HEK293 (cell line): ENCODE measurements at regions of chr9 and their contacts with region 1.

Region 1: GRCh38 chr9:35116898-35117551 is 1.4 kb upstream of the ATOSB start:
- H3K4me3 ChIP-seq: peak overlapping the region; percentile 48
- H3K27ac ChIP-seq: no peak overlapping the region
- H3K4me1 ChIP-seq: peaks cover 15% of the 10 kb centered on the region
- CTCF ChIP-seq: peak; percentile 79

Region 2: DNA sequence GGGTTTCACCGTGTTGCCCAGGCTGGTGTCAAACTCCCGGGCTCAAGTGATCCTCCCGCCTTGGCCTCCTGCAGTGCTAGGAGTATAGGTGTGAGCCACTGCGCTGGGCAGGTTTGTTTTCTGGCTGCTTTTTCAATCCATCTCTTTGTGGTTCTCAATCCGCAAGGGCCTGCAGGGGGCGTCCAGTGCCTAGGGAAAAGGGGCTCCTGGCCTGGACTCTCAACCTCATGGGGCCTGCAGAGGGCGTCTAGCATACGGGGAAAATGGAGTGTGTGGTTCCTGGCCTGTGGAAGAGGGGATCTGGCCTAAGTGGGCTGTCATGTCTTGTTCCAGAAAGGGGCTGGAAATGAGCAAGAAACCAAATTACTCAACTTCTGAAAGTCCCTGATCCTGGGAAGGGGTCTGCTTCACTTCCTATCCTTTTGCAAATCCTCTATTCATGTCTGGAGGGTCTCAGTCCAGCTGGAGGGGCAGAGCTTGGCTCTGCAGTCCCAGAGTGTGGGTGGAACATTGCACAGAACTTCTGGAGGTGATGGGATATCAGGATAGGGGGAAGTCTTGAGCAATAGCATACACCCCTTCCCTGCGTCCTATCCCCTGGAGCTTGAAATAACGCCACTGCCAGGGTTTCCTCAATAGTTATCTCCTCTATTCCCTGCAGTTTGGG is 441.8 kb before region 1 on chr9:
- CTCF ChIA-PET with region 1: no interaction called
- POLR2A ChIA-PET with region 1: no interaction called
- H3K4me3 ChIP-seq: no peak overlapping the region
- H3K27ac ChIP-seq: no peak overlapping the region
- H3K4me1 ChIP-seq: no peaks in the 10 kb centered on the region
- CTCF ChIP-seq: peak; percentile 81

Region 3: DNA sequence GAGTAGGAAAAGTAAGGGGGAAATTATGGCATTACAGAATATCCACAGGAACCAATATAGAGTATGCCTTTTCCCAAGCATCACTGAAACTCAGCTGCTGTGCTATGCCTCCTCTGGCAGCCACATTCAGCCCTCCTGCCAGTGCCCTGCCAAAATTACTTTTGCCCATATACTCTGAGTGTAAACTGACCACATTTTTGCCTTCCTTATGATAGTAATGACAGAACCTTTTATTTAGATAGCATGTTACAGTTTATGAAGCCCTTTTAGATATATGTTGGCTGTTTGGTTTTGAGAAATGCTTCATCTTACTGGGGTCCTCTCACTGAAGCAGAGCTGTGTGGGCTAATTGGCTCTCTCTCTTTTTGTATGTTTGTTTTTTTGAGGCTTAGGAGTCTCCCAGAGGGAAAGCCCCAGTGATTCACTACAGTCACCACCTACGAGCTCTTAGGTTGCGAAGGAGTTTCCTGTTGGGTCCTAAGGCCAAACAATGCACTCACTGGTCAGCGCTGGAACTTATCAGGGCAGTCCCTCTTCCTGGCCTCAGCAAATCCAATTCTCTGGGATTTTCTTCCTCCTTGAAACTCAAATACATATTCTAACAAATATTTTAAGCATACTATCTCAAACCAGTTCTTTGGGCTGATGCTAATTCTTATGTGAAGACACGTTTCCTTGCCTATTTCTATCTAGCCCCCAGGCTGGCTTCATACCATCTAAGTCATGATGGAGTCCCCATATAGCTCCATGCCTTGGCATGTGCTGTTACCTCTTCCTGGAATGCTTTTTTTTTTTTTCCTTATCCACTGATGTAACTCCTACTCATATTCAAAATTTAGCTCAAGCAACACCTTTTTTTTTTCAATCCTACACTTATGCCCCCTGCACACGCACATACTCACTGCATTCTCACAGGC is 155.2 kb before region 1 on chr9:
- CTCF ChIA-PET with region 1: no interaction called
- POLR2A ChIA-PET with region 1: no interaction called
- H3K4me3 ChIP-seq: no peak overlapping the region
- H3K27ac ChIP-seq: no peak overlapping the region
- H3K4me1 ChIP-seq: no peaks in the 10 kb centered on the region
- CTCF ChIP-seq: no peak

Region 4: GRCh38 chr9:35071814-35072460 is 45.1 kb before region 1 on chr9:
- CTCF ChIA-PET with region 1: no interaction called
- POLR2A ChIA-PET with region 1: interaction called, 23 read pairs
- H3K4me3 ChIP-seq: peak overlapping the region; percentile 84
- H3K27ac ChIP-seq: peak overlapping the region; percentile 96
- H3K4me1 ChIP-seq: peaks cover 3% of the 10 kb centered on the region; the same call in 1 of the 2 replicates
- CTCF ChIP-seq: peak; percentile 79; the same call in 1 of the 2 replicates

Region 5: GRCh38 chr9:35096035-35096849 is 20.8 kb before region 1 on chr9 and contains the start of gene PIGO:
- CTCF ChIA-PET with region 1: interaction called, 7 read pairs
- POLR2A ChIA-PET with region 1: interaction called, 92 read pairs
- H3K4me3 ChIP-seq: peak within 1 kb of the TSS; percentile 90
- H3K27ac ChIP-seq: peak within 1 kb of the TSS; percentile 84
- H3K4me1 ChIP-seq: no peaks in the 10 kb centered on the region
- CTCF ChIP-seq: peak; percentile 83

Region 6: DNA sequence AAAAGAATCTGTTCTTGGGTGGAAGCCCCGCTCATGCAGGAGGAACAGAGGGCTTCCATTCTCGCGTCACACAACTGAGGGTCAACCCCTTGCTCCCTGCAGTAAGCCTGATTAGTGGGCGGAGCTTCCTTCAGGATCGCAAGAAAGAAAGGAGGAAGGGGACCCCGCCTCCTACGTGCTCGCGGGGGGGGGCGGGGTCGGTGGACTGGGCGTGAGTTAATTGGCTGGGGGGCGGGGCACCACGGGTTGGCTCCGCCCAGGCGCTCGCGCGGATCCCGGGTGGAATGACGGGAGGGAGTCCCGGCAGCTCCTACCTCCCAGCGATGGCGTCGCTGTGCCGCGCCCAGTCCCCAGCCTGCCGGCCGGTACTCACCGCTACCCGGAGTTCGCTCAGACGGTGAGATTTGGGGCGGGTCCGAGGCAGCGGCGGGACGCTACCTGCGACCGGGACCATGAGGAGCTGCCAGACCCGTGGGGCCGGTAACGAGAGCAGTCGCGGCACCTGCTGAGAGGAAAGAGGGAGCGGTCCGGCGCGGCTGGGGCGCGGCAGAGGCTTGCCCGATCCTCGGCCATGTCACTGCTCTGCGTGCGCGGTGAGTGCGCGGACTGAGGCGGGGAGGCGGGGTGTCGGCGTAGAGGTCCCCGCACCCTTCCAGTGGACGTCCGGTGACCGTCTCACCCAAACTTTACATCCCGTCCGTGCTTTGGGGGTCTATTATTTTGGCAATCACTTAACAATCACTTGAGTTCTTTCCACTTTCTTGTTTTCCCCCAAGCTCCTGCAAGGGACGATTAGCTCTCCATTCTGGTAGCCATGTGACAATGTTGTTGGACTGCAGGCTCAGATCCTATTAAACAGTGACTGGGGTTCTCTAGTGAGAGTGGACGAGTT is 44.9 kb after region 1 on chr9 and contains the start of gene UNC13B:
- CTCF ChIA-PET with region 1: interaction called, 4 read pairs
- POLR2A ChIA-PET with region 1: interaction called, 31 read pairs
- H3K4me3 ChIP-seq: peak within 1 kb of the TSS; percentile 99
- H3K27ac ChIP-seq: peak within 1 kb of the TSS; percentile 40; the same call in 1 of the 2 replicates
- H3K4me1 ChIP-seq: peaks cover 7% of the 10 kb centered on the region
- CTCF ChIP-seq: peak; percentile 63; the same call in 1 of the 2 replicates

Region 7: GRCh38 chr9:35193762-35194161 is 76.7 kb after region 1 on chr9:
- CTCF ChIA-PET with region 1: no interaction called
- POLR2A ChIA-PET with region 1: no interaction called
- H3K4me3 ChIP-seq: no peak overlapping the region
- H3K27ac ChIP-seq: no peak overlapping the region
- H3K4me1 ChIP-seq: no peaks in the 10 kb centered on the region
- CTCF ChIP-seq: no peak; the same call in 1 of the 2 replicates

Region 8: DNA sequence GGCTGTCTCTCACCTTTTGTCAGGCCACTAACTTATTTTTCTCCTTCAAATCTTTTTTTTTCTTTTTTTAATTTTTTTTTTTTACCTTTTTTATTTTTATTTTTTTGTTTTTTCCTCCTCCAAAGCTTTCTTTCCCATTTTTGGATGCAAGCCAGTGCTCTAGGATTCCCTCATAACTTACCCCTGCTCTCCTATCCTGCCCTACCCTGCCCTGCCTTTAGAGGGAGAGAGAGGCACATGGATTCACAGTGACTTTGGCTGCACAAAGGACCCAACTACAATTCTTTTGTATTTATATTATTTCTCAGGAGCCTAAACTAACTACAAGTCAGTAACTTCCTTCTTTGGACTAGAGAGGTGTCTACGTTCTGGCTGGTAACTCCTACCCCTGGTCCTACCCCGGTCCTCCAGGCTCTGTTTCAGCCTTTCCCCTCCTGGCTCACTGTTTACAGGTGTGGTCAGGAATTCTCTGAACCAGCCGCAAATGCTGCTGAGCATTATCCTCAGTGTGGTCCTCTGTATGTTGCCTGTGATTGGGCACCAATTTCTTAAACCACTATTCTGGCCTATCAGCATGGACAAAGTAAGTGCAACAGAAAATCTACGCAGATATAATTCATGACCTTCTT is 364.4 kb after region 1 on chr9:
- CTCF ChIA-PET with region 1: interaction called, 58 read pairs
- POLR2A ChIA-PET with region 1: no interaction called
- H3K4me3 ChIP-seq: no peak overlapping the region
- H3K27ac ChIP-seq: no peak overlapping the region
- H3K4me1 ChIP-seq: no peaks in the 10 kb centered on the region
- CTCF ChIP-seq: no peak